Gastrocnemius medialis (tissue), 4 donors: ENCODE measurements at regions of chr15 and their contacts with region 1.

Region 1: DNA sequence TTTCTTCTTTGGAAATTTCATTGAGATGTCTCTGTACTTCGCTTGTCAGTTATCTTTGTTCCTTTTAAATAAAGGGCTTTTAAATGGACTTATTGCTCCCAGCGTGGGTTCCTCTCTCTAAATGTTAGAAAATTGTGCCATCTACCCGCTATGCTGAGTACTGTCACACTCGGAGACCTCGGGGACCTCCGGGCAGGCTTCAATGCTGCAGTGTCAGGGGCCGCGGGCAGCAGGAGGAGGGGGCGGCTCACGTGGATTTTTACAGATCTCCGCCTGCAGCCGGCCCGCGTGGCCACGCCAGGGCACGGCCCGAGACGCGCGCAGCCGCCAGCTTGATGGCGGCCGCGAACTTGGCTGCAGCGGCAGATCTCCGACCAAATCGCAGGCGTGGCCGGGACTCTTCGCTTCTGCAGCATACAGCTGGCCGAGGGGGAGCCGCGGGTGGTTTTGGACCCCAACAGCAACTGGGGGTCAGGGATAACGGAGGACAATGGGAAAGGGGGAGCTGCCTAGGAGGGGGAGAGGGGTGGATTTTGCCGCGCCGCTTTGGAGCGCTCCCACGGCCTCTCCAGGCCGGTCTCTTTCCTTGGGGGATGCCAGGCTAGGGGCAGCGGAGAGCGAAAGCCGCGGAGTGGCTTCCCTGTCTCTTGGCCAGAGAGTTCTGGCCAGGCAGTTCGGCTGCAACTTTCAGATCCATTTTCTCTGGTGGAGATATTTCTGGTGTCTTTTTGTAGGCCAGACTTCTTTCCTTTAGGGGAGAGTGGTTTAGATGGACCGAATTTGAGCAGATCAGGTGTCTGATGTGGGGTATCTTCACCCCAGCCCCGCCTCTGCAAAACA is 15.3 kb downstream of the NR2F2 start:
- DNase-seq: peak; percentile 67 to 78
- ATAC-seq: peak; percentile 86 to 87
- H3K4me3 ChIP-seq: peak overlapping the region; percentile 62 to 76 (median 67)
- H3K27ac ChIP-seq: peak overlapping the region; percentile 93 to 98 (median 95)
- H3K4me1 ChIP-seq: peaks cover 0 to 19% of the 10 kb centered on the region in 2 donors
- H3K27me3 ChIP-seq: no peaks in the 10 kb centered on the region
- CTCF ChIP-seq: peak; percentile 51 to 80 (median 74)
- POLR2A ChIP-seq: peak; percentile 19 to 40

Region 2: DNA sequence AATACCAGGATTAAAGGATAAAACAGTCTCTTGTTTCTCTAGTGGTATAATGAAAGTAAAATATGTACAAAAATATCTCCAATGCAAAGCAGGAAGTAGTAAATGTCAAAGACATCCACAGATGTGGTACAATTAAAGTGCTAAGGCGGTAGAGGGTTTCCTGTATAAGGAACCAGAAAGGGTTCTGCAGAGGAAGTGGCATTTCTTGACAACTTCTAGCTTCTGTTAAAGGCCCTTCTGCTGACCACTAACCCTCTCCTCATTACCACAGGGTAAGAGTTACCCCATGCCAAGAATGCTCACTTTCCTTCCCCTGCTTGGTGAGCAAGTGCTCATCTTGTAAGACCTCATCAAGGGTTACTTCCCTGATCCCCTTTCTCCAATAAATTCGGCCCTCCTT is 898.9 kb before region 1 on chr15:
- in situ Hi-C with region 1: no loop called
- intact Hi-C with region 1: loop called (anchors 10 kb)
- DNase-seq: no peak
- ATAC-seq: no peak
- H3K4me3 ChIP-seq: no peak overlapping the region
- H3K27ac ChIP-seq: no peak overlapping the region
- H3K4me1 ChIP-seq: no peaks in the 10 kb centered on the region
- H3K27me3 ChIP-seq: no peaks in the 10 kb centered on the region
- CTCF ChIP-seq: no peak
- POLR2A ChIP-seq: no peak

Region 3: DNA sequence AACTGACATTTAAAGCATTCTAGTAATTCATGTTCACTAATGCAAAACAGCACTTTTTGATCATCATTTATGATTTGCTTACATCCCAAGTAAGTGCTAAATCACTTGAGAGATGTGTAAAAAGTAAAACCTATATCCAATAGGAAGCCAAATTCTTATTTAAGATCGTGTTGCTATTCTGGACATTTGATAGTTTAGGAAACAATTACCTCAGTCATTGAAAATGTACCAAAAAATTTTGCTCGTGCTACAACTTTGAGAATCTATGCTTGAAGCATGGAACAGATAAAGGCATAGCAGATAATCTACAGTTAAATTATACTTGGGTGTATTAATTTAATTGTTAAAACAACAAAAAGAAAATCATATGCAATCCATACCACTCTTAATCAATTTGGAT is 586.9 kb before region 1 on chr15:
- in situ Hi-C with region 1: no loop called
- intact Hi-C with region 1: loop called (anchors 5 kb)
- DNase-seq: no peak
- ATAC-seq: no peak
- H3K4me3 ChIP-seq: no peak overlapping the region
- H3K27ac ChIP-seq: no peak overlapping the region
- H3K4me1 ChIP-seq: peaks cover 0 to 7% of the 10 kb centered on the region in 2 donors
- H3K27me3 ChIP-seq: no peaks in the 10 kb centered on the region
- CTCF ChIP-seq: no peak
- POLR2A ChIP-seq: no peak

Region 4: GRCh38 chr15:96273317-96274086 is 72.3 kb before region 1 on chr15:
- in situ Hi-C with region 1: no loop called
- intact Hi-C with region 1: no loop called
- DNase-seq: no peak
- ATAC-seq: no peak
- H3K4me3 ChIP-seq: no peak overlapping the region
- H3K27ac ChIP-seq: no peak overlapping the region
- H3K4me1 ChIP-seq: no peaks in the 10 kb centered on the region
- H3K27me3 ChIP-seq: no peaks in the 10 kb centered on the region
- CTCF ChIP-seq: no peak
- POLR2A ChIP-seq: no peak